CD8-positive, alpha-beta T cell (primary cell): ENCODE measurements at regions of chr6 and their contacts with region 1.

Region 1: DNA sequence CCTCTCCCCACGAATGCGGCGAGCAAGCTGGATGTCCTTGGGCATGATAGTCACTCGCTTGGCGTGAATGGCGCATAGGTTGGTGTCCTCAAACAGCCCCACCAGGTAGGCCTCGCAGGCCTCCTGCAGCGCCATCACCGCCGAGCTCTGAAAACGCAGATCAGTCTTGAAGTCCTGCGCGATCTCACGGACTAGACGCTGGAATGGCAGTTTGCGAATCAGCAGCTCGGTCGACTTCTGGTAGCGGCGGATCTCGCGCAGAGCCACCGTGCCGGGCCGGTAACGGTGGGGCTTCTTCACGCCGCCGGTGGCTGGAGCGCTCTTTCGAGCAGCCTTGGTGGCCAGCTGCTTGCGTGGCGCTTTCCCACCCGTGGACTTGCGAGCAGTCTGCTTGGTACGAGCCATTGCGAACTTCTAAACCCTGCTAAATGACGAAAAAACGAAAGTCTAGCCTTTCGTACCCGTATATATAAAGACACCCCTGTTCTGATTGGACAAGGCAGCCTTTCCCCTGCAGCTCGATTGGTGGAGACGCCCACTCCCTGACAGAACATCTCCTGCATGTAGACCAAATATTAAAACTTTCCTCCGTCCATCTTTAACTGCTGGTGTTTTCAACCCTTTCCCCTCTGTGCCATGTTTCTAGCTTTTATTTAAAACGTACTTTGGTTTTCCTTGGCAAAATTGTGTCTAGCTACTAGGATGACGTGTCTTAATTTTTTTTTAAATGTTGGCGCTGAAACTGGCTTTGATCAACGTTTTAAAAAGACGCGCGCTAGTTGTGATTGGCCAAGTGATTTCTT is 109.8 kb downstream of the HFE start:
- DNase-seq: peak; percentile 53 to 95 (median 79)
- ATAC-seq: peak; percentile 57
- H3K4me3 ChIP-seq: peak overlapping the region; percentile 78 to 82
- H3K4me3 Mint-ChIP-seq: peak overlapping the region; percentile 96
- H3K27ac ChIP-seq: peak overlapping the region; percentile 88 to 89
- H3K27ac Mint-ChIP-seq: peak overlapping the region; percentile 99
- H3K4me1 ChIP-seq: peaks cover 20% of the 10 kb centered on the region
- H3K4me1 Mint-ChIP-seq: peaks cover 44% of the 10 kb centered on the region
- H3K27me3 ChIP-seq: no peaks in the 10 kb centered on the region
- H3K27me3 Mint-ChIP-seq: no peaks in the 10 kb centered on the region
- CTCF ChIP-seq: no peak

Region 2: DNA sequence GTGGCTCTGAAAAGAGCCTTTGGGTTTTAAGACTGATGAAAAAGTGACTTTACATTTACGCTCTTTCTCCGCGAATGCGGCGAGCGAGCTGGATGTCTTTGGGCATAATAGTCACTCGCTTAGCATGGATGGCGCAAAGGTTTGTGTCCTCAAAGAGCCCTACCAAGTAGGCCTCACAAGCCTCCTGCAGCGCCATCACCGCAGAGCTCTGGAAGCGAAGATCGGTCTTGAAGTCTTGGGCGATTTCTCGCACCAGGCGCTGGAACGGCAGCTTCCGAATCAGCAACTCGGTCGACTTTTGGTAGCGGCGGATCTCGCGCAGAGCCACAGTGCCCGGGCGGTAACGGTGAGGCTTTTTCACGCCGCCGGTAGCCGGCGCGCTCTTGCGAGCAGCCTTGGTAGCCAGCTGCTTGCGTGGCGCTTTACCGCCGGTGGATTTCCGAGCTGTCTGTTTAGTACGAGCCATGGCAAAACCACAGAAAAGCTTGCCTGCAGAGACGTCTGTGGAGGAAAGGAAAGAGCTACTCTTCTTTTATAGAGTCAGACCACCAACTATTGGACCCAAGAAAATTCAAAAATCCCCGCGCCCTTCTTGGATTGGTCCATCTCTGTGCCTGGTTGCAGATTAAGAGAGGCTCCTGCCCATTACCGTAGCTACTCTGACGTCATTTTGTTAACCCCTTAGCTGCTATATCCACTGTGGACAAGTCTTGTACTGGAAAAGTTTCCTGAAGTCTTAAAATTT is 165.3 kb before region 1 on chr6:
- CTCF ChIA-PET with region 1: interaction called, 5 read pairs
- POLR2A ChIA-PET with region 1: interaction called, 64 read pairs
- intact Hi-C with region 1: loop called (anchors 2 to 5 kb)
- DNase-seq: peak; percentile 79 to 93 (median 88)
- ATAC-seq: peak; percentile 63
- H3K4me3 ChIP-seq: peak overlapping the region; percentile 68 to 71
- H3K4me3 Mint-ChIP-seq: peak overlapping the region; percentile 93
- H3K27ac ChIP-seq: peak overlapping the region; percentile 76 to 79
- H3K27ac Mint-ChIP-seq: peak overlapping the region; percentile 96
- H3K4me1 ChIP-seq: peaks cover 31% of the 10 kb centered on the region
- H3K4me1 Mint-ChIP-seq: peaks cover 46% of the 10 kb centered on the region
- H3K27me3 ChIP-seq: no peaks in the 10 kb centered on the region
- H3K27me3 Mint-ChIP-seq: no peaks in the 10 kb centered on the region
- CTCF ChIP-seq: no peak

Region 3: GRCh38 chr6:26103770-26104456 is 93.1 kb before region 1 on chr6:
- CTCF ChIA-PET with region 1: no interaction called
- POLR2A ChIA-PET with region 1: interaction called, 40 read pairs
- intact Hi-C with region 1: loop called in 1 of 2 experiments (anchors 1 kb)
- DNase-seq: peak; percentile 84 to 97 (median 89)
- ATAC-seq: peak; percentile 91
- H3K4me3 ChIP-seq: peak overlapping the region; percentile 52 to 58
- H3K4me3 Mint-ChIP-seq: peak overlapping the region; percentile 85
- H3K27ac ChIP-seq: peak overlapping the region; percentile 85 to 92
- H3K27ac Mint-ChIP-seq: peak overlapping the region; percentile 98
- H3K4me1 ChIP-seq: peaks cover 7% of the 10 kb centered on the region
- H3K4me1 Mint-ChIP-seq: peaks cover 17% of the 10 kb centered on the region
- H3K27me3 ChIP-seq: no peaks in the 10 kb centered on the region
- H3K27me3 Mint-ChIP-seq: no peaks in the 10 kb centered on the region
- CTCF ChIP-seq: peak; percentile 67

Region 4: GRCh38 chr6:26216356-26216885 is 19.4 kb after region 1 on chr6:
- CTCF ChIA-PET with region 1: interaction called, 45 read pairs
- POLR2A ChIA-PET with region 1: interaction called, 640 read pairs
- intact Hi-C with region 1: loop called (anchors 1 kb)
- DNase-seq: peak; percentile 61 to 96 (median 73)
- ATAC-seq: peak; percentile 79
- H3K4me3 ChIP-seq: peak overlapping the region; percentile 71 to 74
- H3K4me3 Mint-ChIP-seq: no peak overlapping the region
- H3K27ac ChIP-seq: peak overlapping the region; percentile 82 to 91
- H3K27ac Mint-ChIP-seq: no peak overlapping the region
- H3K4me1 ChIP-seq: peaks cover 19% of the 10 kb centered on the region
- H3K4me1 Mint-ChIP-seq: peaks cover 14% of the 10 kb centered on the region
- H3K27me3 ChIP-seq: no peaks in the 10 kb centered on the region
- H3K27me3 Mint-ChIP-seq: no peaks in the 10 kb centered on the region
- CTCF ChIP-seq: no peak

Region 5: DNA sequence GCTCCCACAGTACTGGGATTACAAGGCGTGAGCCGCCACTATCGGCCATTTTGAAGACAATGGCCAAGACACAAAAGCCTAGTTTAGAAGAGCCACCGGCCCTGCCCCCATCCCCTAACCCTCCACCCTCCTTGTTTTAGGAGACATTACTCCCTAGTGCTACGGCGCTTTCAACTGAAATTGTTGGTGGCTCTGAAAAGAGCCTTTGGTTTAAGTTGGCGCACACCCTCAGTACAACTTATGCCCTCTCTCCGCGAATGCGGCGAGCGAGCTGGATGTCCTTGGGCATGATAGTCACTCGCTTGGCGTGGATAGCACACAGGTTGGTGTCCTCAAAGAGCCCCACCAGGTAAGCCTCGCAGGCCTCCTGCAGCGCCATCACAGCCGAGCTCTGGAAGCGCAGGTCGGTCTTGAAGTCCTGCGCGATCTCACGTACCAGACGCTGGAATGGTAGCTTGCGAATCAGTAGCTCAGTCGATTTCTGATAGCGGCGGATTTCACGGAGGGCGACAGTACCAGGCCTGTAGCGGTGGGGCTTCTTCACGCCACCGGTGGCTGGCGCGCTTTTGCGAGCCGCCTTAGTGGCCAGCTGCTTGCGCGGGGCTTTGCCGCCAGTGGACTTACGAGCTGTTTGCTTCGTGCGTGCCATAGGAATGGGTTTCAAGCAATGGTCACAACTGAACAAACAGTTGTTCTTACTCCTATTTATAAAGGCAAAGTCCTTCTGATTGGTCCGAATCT is 53.1 kb after region 1 on chr6:
- CTCF ChIA-PET with region 1: interaction called, 24 read pairs
- POLR2A ChIA-PET with region 1: no interaction called
- intact Hi-C with region 1: no loop called
- DNase-seq: peak; percentile 59 to 91 (median 79)
- ATAC-seq: peak; percentile 77
- H3K4me3 ChIP-seq: peak overlapping the region; percentile 74 to 80
- H3K4me3 Mint-ChIP-seq: peak overlapping the region; percentile 90
- H3K27ac ChIP-seq: peak overlapping the region; percentile 73 to 83
- H3K27ac Mint-ChIP-seq: peak overlapping the region; percentile 96
- H3K4me1 ChIP-seq: peaks cover 15% of the 10 kb centered on the region
- H3K4me1 Mint-ChIP-seq: peaks cover 40% of the 10 kb centered on the region
- H3K27me3 ChIP-seq: no peaks in the 10 kb centered on the region
- H3K27me3 Mint-ChIP-seq: no peaks in the 10 kb centered on the region
- CTCF ChIP-seq: peak; percentile 57

Region 6: DNA sequence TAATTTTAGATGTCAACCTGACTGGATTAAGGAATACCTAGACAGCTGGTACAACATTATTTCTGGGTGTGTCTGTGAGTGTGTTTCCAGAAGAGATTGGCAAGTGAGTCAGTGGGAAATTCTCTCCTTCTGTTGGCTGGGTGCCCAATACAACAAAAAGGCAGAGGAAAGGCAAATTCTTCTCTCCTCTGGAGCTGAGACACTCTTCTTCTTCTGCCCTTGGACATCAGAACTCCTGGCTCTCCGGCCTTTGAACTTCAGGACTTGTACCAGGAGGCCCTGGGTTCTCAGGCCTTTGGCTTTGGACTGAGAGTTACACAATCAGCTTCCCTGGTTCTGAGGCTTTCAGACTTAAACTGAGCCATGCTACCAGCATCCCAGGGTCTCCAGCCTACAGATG is 197.2 kb after region 1 on chr6:
- CTCF ChIA-PET with region 1: no interaction called
- POLR2A ChIA-PET with region 1: no interaction called
- intact Hi-C with region 1: no loop called
- DNase-seq: no peak
- ATAC-seq: no peak
- H3K4me3 ChIP-seq: no peak overlapping the region
- H3K4me3 Mint-ChIP-seq: no peak overlapping the region
- H3K27ac ChIP-seq: no peak overlapping the region
- H3K27ac Mint-ChIP-seq: no peak overlapping the region
- H3K4me1 ChIP-seq: no peaks in the 10 kb centered on the region
- H3K4me1 Mint-ChIP-seq: no peaks in the 10 kb centered on the region
- H3K27me3 ChIP-seq: no peaks in the 10 kb centered on the region
- H3K27me3 Mint-ChIP-seq: no peaks in the 10 kb centered on the region
- CTCF ChIP-seq: no peak

Region 7: DNA sequence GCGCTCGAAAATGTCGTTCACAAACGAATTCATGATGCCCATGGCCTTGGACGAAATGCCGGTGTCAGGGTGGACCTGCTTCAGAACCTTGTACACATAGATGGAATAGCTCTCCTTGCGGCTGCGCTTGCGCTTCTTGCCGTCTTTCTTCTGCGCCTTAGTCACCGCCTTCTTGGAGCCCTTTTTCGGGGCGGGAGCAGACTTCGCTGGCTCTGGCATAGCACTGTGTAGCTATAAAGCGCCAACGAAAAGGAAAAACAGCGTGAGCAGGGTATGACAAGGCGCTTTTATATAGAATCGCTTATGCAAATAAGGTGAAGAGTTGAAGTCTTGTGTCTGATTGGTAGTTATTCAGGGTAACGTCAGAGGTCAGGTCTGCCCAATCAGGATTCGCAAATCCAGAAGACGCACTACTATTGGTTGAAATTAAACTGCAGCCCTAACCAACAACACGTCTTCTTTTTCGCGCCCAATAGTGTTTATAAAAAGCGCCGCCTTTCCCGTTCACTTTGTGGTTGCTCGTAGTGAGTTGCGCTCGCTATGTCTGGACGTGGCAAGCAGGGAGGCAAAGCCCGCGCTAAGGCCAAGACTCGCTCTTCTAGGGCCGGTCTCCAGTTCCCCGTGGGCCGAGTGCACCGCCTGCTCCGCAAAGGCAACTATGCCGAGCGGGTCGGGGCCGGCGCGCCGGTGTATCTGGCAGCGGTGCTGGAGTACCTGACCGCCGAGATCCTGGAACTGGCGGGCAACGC is 935.7 kb after region 1 on chr6:
- CTCF ChIA-PET with region 1: no interaction called
- POLR2A ChIA-PET with region 1: interaction called, 78 read pairs
- intact Hi-C with region 1: loop called in 1 of 2 experiments (anchors 2 kb)
- DNase-seq: peak; percentile 80 to 99 (median 87)
- ATAC-seq: peak; percentile 82
- H3K4me3 ChIP-seq: peak overlapping the region; percentile 76 to 83
- H3K4me3 Mint-ChIP-seq: no peak overlapping the region
- H3K27ac ChIP-seq: peak overlapping the region; percentile 86 to 92
- H3K27ac Mint-ChIP-seq: no peak overlapping the region
- H3K4me1 ChIP-seq: peaks cover 15% of the 10 kb centered on the region
- H3K4me1 Mint-ChIP-seq: peaks cover 21% of the 10 kb centered on the region
- H3K27me3 ChIP-seq: no peaks in the 10 kb centered on the region
- H3K27me3 Mint-ChIP-seq: no peaks in the 10 kb centered on the region
- CTCF ChIP-seq: no peak

Region 8: GRCh38 chr6:27864906-27865849 is 1668.1 kb after region 1 on chr6:
- CTCF ChIA-PET with region 1: no interaction called
- POLR2A ChIA-PET with region 1: interaction called, 41 read pairs
- intact Hi-C with region 1: no loop called
- DNase-seq: peak; percentile 37 to 97 (median 56)
- ATAC-seq: peak; percentile 83
- H3K4me3 ChIP-seq: peak overlapping the region; percentile 71 to 79
- H3K4me3 Mint-ChIP-seq: peak overlapping the region; percentile 95
- H3K27ac ChIP-seq: peak overlapping the region; percentile 67 to 83
- H3K27ac Mint-ChIP-seq: peak overlapping the region; percentile 94
- H3K4me1 ChIP-seq: peaks cover 17% of the 10 kb centered on the region
- H3K4me1 Mint-ChIP-seq: peaks cover 38% of the 10 kb centered on the region
- H3K27me3 ChIP-seq: no peaks in the 10 kb centered on the region
- H3K27me3 Mint-ChIP-seq: no peaks in the 10 kb centered on the region
- CTCF ChIP-seq: no peak